Activated CD4-positive, alpha-beta memory T cell treated with anti-CD3 and anti-CD28 coated beads, Interleukin-2, amount 10 ng/mL, durations not matched to agents 7 days and 5 days (primary cell): ENCODE measurements at regions of chr2 and their contacts with region 1.

Region 1: DNA sequence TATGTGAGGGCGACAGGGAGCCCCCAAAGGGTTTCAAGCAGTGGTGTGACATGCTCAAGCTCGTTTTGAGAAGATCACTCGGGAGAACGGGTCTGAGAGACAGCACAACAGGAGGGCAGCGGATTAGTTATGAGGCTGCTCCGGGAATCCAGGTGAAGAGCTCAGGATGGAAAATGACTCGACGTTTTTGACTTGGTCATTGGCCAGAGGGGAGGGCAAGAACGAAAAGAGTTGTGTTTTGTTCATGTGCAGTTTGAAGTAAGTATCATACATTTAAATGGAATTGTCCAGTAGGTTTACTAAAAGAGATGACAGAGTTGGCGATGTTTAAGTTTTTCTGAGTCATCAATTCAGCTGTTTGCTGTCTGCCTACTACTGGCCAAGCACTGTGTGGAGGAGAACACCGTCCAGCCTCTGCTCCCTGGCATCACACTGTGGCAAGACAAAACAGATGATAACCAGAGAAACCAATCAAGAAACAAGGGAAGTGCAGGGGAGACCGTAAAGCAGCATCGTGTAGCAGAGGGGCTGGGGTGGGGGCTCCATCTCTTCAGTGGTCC is 25.3 kb upstream of the ANXA4 start:
- DNase-seq: no peak
- H3K4me3 Mint-ChIP-seq: no peak overlapping the region
- H3K27ac Mint-ChIP-seq: no peak overlapping the region
- H3K4me1 Mint-ChIP-seq: peaks cover 15% of the 10 kb centered on the region
- H3K27me3 Mint-ChIP-seq: no peaks in the 10 kb centered on the region

Region 2: GRCh38 chr2:69560147-69560482 is 156.5 kb before region 1 on chr2:
- CTCF ChIA-PET with region 1: interaction called, 19 read pairs
- POLR2A ChIA-PET with region 1: no interaction called
- DNase-seq: no peak
- H3K4me3 Mint-ChIP-seq: no peak overlapping the region
- H3K27ac Mint-ChIP-seq: no peak overlapping the region
- H3K4me1 Mint-ChIP-seq: peaks cover 38% of the 10 kb centered on the region
- H3K27me3 Mint-ChIP-seq: no peaks in the 10 kb centered on the region

Region 3: DNA sequence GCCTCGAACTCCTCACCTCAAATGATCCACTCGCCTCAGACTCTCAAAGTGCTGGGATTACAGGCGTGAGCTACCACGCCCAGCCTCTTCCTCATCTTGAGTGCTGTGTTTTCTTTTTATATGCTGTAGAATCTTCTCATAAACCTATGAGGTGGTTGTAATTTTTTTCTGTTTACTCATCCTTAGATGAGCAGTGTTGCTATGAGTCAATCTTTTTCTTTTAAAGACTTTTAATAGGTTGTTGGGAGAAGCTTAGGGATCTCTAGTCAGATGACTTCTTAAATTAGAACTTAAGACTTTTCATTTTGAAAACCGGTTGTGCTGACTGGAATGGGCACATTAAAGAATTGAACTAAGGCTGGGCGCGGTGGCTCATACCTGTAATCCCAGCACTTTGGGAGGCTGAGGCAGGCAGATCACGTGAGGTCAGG is 64.4 kb before region 1 on chr2:
- CTCF ChIA-PET with region 1: interaction called, 23 read pairs
- POLR2A ChIA-PET with region 1: interaction called, 3 read pairs
- DNase-seq: no peak
- H3K4me3 Mint-ChIP-seq: no peak overlapping the region
- H3K27ac Mint-ChIP-seq: peak overlapping the region; percentile 59
- H3K4me1 Mint-ChIP-seq: peaks cover 52% of the 10 kb centered on the region
- H3K27me3 Mint-ChIP-seq: no peaks in the 10 kb centered on the region

Region 4: GRCh38 chr2:69685321-69686048 is 31.1 kb before region 1 on chr2:
- CTCF ChIA-PET with region 1: no interaction called
- POLR2A ChIA-PET with region 1: no interaction called
- DNase-seq: peak; percentile 34
- H3K4me3 Mint-ChIP-seq: no peak overlapping the region
- H3K27ac Mint-ChIP-seq: no peak overlapping the region
- H3K4me1 Mint-ChIP-seq: peaks cover 64% of the 10 kb centered on the region
- H3K27me3 Mint-ChIP-seq: no peaks in the 10 kb centered on the region